ENCODE measurements at regions of chr18 and their contacts with region 1.

Region 1: GRCh38 chr18:36129300-36130038 is at the starts of genes ELP2 and SLC39A6:
- DNase-seq: peak; percentile 99
- H3K4me3 ChIP-seq: peak within 1 kb of the TSS; percentile 95 to 100
- H3K27ac ChIP-seq: peak within 1 kb of the TSS; percentile 99 to 100
- H3K4me1 ChIP-seq: peaks cover 4 to 36% of the 10 kb centered on the region in 2 experiments; a peak in 2 of 4 replicates
- H3K27me3 ChIP-seq: no peaks in the 10 kb centered on the region
- CTCF ChIP-seq: no peak
- EP300 ChIP-seq: no peak
- RAD21 ChIP-seq: no peak
- polyA plus RNA-seq, gene ELP2: 38.3 and 48.5 TPM in 2 replicates
- polyA plus RNA-seq, gene SLC39A6: 67.4 and 112 TPM in 2 replicates

Region 2: GRCh38 chr18:36015629-36016028 is 113.8 kb before region 1 on chr18:
- CTCF ChIA-PET with region 1: interaction called, 12 read pairs
- POLR2A ChIA-PET with region 1: interaction called, 3 read pairs
- DNase-seq: no peak
- H3K4me3 ChIP-seq: no peak overlapping the region
- H3K27ac ChIP-seq: no peak overlapping the region
- H3K4me1 ChIP-seq: peaks cover 0 to 11% of the 10 kb centered on the region in 2 experiments; a peak in 2 of 4 replicates
- H3K27me3 ChIP-seq: no peaks in the 10 kb centered on the region
- CTCF ChIP-seq: no peak
- EP300 ChIP-seq: no peak
- RAD21 ChIP-seq: no peak

Measured in SK-N-SH (cell line).